Heart left ventricle (tissue), 16 donors: ENCODE measurements at regions of chr5 and their contacts with region 1.

Region 1: GRCh38 chr5:88729084-88729828 is 153.7 kb downstream of the MEF2C start:
- DNase-seq: peak in 4 of 5 donors; percentile 55 to 71 (median 62)
- ATAC-seq: peak in 3 of 4 donors; percentile 75 to 85 (median 81)
- H3K4me3 ChIP-seq: no peak overlapping the region
- H3K27ac ChIP-seq: no peak overlapping the region
- H3K4me1 ChIP-seq: peaks cover 0 to 40% (median 20%) of the 10 kb centered on the region in 12 donors
- H3K27me3 ChIP-seq: no peaks in the 10 kb centered on the region
- CTCF ChIP-seq: peak; percentile 76 to 93 (median 82)
- POLR2A ChIP-seq: no peak

Region 2: DNA sequence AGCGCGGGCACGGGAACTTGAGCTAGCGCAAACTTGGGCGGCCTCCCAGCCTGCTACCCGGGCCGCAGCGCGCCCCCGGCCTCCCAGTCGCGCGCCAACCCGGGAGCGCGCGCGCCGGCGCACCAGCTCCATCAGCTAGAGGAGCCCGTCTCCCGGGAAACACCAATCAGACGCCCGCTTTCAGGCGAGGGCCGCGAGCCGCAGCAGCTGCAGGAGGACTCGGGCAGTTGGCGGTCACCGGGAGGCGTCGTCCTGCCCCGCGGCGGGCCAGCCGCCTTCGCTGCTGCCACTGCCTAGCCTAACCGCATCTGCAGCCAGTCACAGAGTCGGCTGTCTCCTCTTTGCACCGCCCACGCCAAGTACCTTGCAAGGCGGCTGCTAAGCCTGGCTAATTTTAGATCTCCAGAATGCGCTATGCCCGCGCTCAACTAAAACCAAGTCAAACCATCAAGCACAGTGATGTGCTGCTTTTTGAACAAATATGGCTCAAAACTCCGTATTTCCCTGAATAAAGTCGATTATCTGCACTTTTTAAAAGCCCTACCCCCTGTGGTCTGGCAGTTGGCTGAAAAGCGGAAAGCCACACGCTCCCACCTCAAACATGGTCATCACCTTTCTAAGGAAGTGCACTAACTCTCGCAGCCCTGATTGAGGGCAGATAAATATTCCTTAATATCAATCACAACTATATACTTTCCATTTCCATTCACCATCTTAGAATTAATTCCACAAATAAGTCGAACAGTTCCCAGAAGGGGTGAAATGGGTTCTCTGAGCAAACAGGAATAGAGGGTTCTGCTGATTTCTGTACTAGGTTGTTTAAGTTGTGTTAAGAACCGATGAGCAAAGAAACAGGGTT is 68.1 kb before region 1 on chr5:
- intact Hi-C with region 1: no loop called
- DNase-seq: peak in 4 of 5 donors; percentile 44 to 72 (median 46)
- ATAC-seq: peak; percentile 20 to 80 (median 74)
- H3K4me3 ChIP-seq: peak overlapping the region in 11 of 12 donors; percentile 9 to 53 (median 38)
- H3K27ac ChIP-seq: peak overlapping the region in 1 of 12 donors; percentile 11
- H3K4me1 ChIP-seq: peaks cover 0 to 23% (median 8%) of the 10 kb centered on the region in 12 donors
- H3K27me3 ChIP-seq: peaks cover 49 to 99% (median 90%) of the 10 kb centered on the region in 9 donors
- CTCF ChIP-seq: no peak
- POLR2A ChIP-seq: no peak

Region 3: GRCh38 chr5:88785391-88786219 is 56.3 kb after region 1 on chr5:
- intact Hi-C with region 1: loop called in 2 of 10 experiments (anchors 2 to 10 kb)
- DNase-seq: peak in 2 of 5 donors; percentile 53 to 61
- ATAC-seq: peak; percentile 91 to 96 (median 94)
- H3K4me3 ChIP-seq: peak overlapping the region in 9 of 12 donors; percentile 8 to 35 (median 20)
- H3K27ac ChIP-seq: peak overlapping the region; percentile 14 to 88 (median 82)
- H3K4me1 ChIP-seq: peaks cover 4 to 56% (median 37%) of the 10 kb centered on the region in 12 donors
- H3K27me3 ChIP-seq: no peaks in the 10 kb centered on the region
- CTCF ChIP-seq: no peak
- POLR2A ChIP-seq: no peak

Region 4: DNA sequence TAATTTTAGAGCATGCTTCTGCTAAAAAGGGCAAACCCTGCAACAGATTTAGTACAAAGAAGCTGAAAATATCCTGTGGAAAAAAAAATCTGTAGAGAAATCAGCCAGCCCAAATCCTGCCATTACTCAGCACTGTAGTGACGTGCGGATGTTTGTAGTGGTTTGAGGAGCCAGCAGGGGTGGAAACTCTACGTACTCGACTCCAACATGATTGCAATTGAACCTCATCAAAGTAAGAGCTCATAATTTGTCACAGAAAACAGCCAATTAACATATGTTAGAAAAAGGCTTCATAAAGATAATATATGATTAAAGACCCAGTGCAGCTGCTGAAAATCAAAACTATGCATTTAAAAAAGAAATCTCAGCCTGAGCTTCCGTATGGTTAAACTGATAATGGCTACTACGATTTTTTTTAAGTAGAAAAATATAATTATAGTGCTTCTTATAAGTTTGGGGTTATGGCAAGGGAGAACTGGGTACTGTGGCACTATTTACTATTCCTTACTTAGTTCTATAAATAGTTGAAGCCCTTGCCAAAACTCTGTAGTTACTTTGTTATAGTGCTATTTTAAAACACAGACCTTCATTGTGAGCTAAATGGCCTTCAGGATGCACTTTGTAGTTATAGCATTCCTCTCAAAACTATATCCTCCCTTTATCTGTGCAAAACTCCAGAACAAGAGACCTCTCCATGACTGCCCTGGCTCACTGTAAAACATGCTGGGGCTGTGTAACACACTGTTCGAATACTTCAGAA is 104.3 kb after region 1 on chr5:
- intact Hi-C with region 1: loop called in 4 of 10 experiments (anchors 5 to 10 kb)
- DNase-seq: peak in 4 of 5 donors; percentile 61 to 79 (median 72)
- ATAC-seq: peak; percentile 63 to 86 (median 78)
- H3K4me3 ChIP-seq: peak overlapping the region in 9 of 12 donors; percentile 21 to 41 (median 35)
- H3K27ac ChIP-seq: peak overlapping the region; percentile 56 to 93 (median 87)
- H3K4me1 ChIP-seq: peaks cover 11 to 97% (median 75%) of the 10 kb centered on the region in 12 donors
- H3K27me3 ChIP-seq: no peaks in the 10 kb centered on the region
- CTCF ChIP-seq: peak in 2 of 12 donors; percentile 23 to 24
- POLR2A ChIP-seq: no peak

Region 5: DNA sequence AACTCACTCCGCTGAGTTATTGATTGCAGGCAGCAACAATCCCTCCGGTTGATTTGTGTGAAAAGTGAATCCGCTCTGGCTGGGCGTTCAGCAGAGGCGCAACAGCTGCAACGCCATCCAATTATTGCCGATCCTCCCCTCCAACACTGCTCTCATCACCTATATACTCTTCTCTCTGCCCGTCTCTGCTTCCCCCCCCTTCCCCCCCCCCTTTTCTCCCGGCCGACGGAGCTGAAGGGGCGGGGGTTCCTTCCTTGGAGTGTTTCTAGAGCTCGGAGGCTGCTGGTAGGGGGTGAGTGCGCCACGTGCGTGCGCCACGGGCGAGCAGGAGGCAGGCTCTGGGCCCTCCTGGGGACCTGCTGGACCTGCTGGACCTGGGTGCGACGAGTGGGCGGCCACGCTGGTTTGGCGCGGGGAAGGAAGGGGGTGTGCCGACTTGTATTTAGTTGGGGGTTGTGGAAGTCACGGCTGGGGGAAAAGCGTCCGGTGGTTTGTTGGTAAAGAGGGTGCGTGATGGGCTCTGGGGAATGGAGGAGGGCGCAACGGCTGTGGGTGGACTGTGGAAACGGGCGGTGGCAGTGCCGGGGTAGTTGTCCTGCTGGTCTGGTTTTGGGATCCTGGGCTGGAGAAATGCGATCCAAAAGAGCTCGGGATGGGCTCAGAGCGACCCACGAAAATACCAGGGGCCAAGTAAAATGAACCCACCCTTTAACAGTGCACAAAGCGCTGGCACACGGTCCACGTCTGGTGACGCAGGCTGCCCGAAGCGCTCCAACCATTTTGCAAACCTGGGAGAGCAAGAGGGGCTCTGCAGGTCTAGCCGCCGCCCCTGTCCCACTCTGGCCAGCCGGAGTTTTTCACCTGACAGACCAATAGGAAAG is 160.2 kb after region 1 on chr5:
- intact Hi-C with region 1: loop called in 8 of 10 experiments (anchors 2 to 5 kb)
- DNase-seq: peak; percentile 70 to 84 (median 79)
- ATAC-seq: peak; percentile 72 to 92 (median 88)
- H3K4me3 ChIP-seq: peak overlapping the region; percentile 24 to 74 (median 64)
- H3K27ac ChIP-seq: peak overlapping the region; percentile 48 to 92 (median 90)
- H3K4me1 ChIP-seq: peaks cover 0 to 66% (median 32%) of the 10 kb centered on the region in 12 donors
- H3K27me3 ChIP-seq: no peaks in the 10 kb centered on the region
- CTCF ChIP-seq: peak in 1 of 12 donors; percentile 5
- POLR2A ChIP-seq: peak in 1 of 2 donors; percentile 13

Region 6: DNA sequence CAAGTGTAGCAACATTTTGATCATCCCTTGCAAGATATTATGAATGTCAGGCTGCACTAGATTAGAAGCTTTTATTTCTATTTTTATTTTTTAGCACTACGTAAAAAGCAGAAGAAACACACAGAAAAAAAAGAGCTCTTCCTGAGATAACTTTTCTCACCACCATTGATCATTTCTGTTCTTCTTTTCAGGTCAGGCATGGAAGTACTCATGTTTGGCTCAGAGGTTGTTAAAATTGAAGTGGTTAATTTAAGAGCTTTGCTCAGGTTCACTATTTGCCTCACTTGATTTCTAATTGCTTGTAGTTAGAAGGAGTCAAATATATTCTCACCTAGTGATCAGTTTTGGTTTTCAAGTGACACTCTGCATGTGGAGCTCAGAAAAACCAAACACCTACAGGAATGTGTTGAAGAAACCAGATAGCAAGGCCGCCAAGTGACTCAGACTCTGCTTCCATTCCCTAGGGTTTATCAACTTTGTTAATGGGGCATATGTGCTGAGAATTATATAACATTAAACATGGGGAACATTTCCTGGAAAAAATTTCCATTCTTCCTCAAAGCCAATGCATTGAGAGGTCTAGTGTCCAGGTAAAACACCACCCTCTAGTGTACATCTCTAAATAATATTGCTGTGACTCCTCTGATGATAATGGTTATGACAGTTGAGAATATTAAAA is 1000.5 kb after region 1 on chr5:
- intact Hi-C with region 1: loop called in 1 of 10 experiments (anchors 10 kb)
- DNase-seq: no peak
- ATAC-seq: peak in 1 of 4 donors; percentile 38
- H3K4me3 ChIP-seq: no peak overlapping the region
- H3K27ac ChIP-seq: no peak overlapping the region
- H3K4me1 ChIP-seq: peaks cover 0 to 15% (median 9%) of the 10 kb centered on the region in 12 donors
- H3K27me3 ChIP-seq: no peaks in the 10 kb centered on the region
- CTCF ChIP-seq: peak in 4 of 12 donors; percentile 6 to 38 (median 22)
- POLR2A ChIP-seq: no peak

Region 7: GRCh38 chr5:90161414-90161813 is 1432.2 kb after region 1 on chr5:
- intact Hi-C with region 1: loop called in 1 of 10 experiments (anchors 10 kb)
- DNase-seq: peak; percentile 50 to 69 (median 57)
- ATAC-seq: peak in 3 of 4 donors; percentile 81 to 95 (median 88)
- H3K4me3 ChIP-seq: no peak overlapping the region
- H3K27ac ChIP-seq: no peak overlapping the region
- H3K4me1 ChIP-seq: peaks cover 0 to 6% (median 0%) of the 10 kb centered on the region in 12 donors
- H3K27me3 ChIP-seq: no peaks in the 10 kb centered on the region
- CTCF ChIP-seq: peak in 8 of 12 donors; percentile 13 to 48 (median 30)
- POLR2A ChIP-seq: no peak

Region 8: GRCh38 chr5:90264689-90265544 is 1535.7 kb after region 1 on chr5:
- intact Hi-C with region 1: loop called (anchors 1 to 10 kb)
- DNase-seq: peak; percentile 51 to 66 (median 59)
- ATAC-seq: peak in 3 of 4 donors; percentile 67 to 69 (median 68)
- H3K4me3 ChIP-seq: no peak overlapping the region
- H3K27ac ChIP-seq: peak overlapping the region in 1 of 12 donors; percentile 7
- H3K4me1 ChIP-seq: peaks cover 0 to 5% (median 0%) of the 10 kb centered on the region in 12 donors
- H3K27me3 ChIP-seq: no peaks in the 10 kb centered on the region
- CTCF ChIP-seq: peak; percentile 85 to 97 (median 92)
- POLR2A ChIP-seq: no peak